ENCODE measurements at regions of chr13 and their contacts with region 1.

Region 1: GRCh38 chr13:49996951-49997895 is at the start of gene TRIM13:
- DNase-seq: peak; percentile 72 to 90 (median 81)
- ATAC-seq: peak; percentile 80
- H3K4me3 ChIP-seq: peak within 1 kb of the TSS; percentile 87 to 99
- H3K4me3 Mint-ChIP-seq: peak within 1 kb of the TSS; percentile 86
- H3K27ac ChIP-seq: peak within 1 kb of the TSS; percentile 84 to 85
- H3K27ac Mint-ChIP-seq: peak within 1 kb of the TSS; percentile 86
- H3K4me1 ChIP-seq: peaks cover 27% of the 10 kb centered on the region
- H3K4me1 Mint-ChIP-seq: peaks cover 49% of the 10 kb centered on the region
- H3K27me3 ChIP-seq: no peaks in the 10 kb centered on the region
- H3K27me3 Mint-ChIP-seq: no peaks in the 10 kb centered on the region
- CTCF ChIP-seq: peak; percentile 78
- total RNA-seq, gene TRIM13: 24.0 to 24.4 TPM

Region 2: DNA sequence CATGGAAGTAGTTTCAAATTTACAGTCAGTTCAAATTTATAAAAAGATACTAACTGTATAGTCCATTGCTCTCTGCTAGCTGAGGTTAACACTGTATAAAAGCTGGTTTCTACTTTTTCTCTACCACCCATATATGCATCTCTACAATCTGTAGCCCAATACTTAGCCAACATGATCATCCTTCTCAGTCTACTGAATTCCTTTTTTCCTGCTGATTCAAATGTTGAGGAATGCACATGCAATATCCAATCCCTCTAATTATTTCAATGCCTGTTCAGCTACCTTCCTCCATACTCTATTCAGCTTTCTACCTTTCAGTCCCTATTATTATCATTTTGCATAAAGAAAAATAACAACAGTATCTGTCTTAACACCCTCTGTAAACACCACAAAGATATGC is 220.4 kb before region 1 on chr13:
- CTCF ChIA-PET with region 1: no interaction called
- POLR2A ChIA-PET with region 1: no interaction called
- intact Hi-C with region 1: no loop called
- DNase-seq: no peak
- ATAC-seq: no peak
- H3K4me3 ChIP-seq: no peak overlapping the region
- H3K4me3 Mint-ChIP-seq: no peak overlapping the region
- H3K27ac ChIP-seq: no peak overlapping the region
- H3K27ac Mint-ChIP-seq: no peak overlapping the region
- H3K4me1 ChIP-seq: peaks cover 15% of the 10 kb centered on the region
- H3K4me1 Mint-ChIP-seq: peaks cover 54% of the 10 kb centered on the region
- H3K27me3 ChIP-seq: no peaks in the 10 kb centered on the region
- H3K27me3 Mint-ChIP-seq: no peaks in the 10 kb centered on the region
- CTCF ChIP-seq: no peak

Region 3: GRCh38 chr13:49936085-49936940 is 60.9 kb before region 1 on chr13 and contains the start of gene SPRYD7:
- CTCF ChIA-PET with region 1: interaction called, 7 read pairs
- POLR2A ChIA-PET with region 1: interaction called, 10 read pairs
- intact Hi-C with region 1: loop called (anchors 1 to 2 kb)
- DNase-seq: peak; percentile 82 to 97 (median 94)
- ATAC-seq: peak; percentile 85
- H3K4me3 ChIP-seq: peak within 1 kb of the TSS; percentile 81 to 98
- H3K4me3 Mint-ChIP-seq: peak within 1 kb of the TSS; percentile 88
- H3K27ac ChIP-seq: peak within 1 kb of the TSS; percentile 37 to 44
- H3K27ac Mint-ChIP-seq: peak within 1 kb of the TSS; percentile 81
- H3K4me1 ChIP-seq: peaks cover 14% of the 10 kb centered on the region
- H3K4me1 Mint-ChIP-seq: peaks cover 19% of the 10 kb centered on the region
- H3K27me3 ChIP-seq: no peaks in the 10 kb centered on the region
- H3K27me3 Mint-ChIP-seq: no peaks in the 10 kb centered on the region
- CTCF ChIP-seq: peak; percentile 62
- total RNA-seq, gene SPRYD7: 1.2 to 1.4 TPM

Region 4: GRCh38 chr13:50071379-50071778 is 74.2 kb after region 1 on chr13:
- CTCF ChIA-PET with region 1: no interaction called
- POLR2A ChIA-PET with region 1: interaction called, 11 read pairs
- intact Hi-C with region 1: no loop called
- DNase-seq: no peak
- ATAC-seq: no peak
- H3K4me3 ChIP-seq: no peak overlapping the region
- H3K4me3 Mint-ChIP-seq: no peak overlapping the region
- H3K27ac ChIP-seq: no peak overlapping the region
- H3K27ac Mint-ChIP-seq: no peak overlapping the region
- H3K4me1 ChIP-seq: no peaks in the 10 kb centered on the region
- H3K4me1 Mint-ChIP-seq: peaks cover 7% of the 10 kb centered on the region
- H3K27me3 ChIP-seq: peaks cover 0 to 11% of the 10 kb centered on the region in 2 experiments
- H3K27me3 Mint-ChIP-seq: peaks cover 12% of the 10 kb centered on the region
- CTCF ChIP-seq: no peak

Region 5: GRCh38 chr13:50236898-50237318 is 239.7 kb after region 1 on chr13:
- CTCF ChIA-PET with region 1: no interaction called
- POLR2A ChIA-PET with region 1: no interaction called
- intact Hi-C with region 1: loop called in 1 of 2 experiments (anchors 5 kb)
- DNase-seq: peak in 5 of 9 experiments; percentile 4 to 82 (median 37)
- ATAC-seq: peak; percentile 86
- H3K4me3 ChIP-seq: peak overlapping the region in 1 of 2 experiments; percentile 2
- H3K4me3 Mint-ChIP-seq: peak overlapping the region; percentile 83
- H3K27ac ChIP-seq: peak overlapping the region; percentile 15 to 64
- H3K27ac Mint-ChIP-seq: peak overlapping the region; percentile 75
- H3K4me1 ChIP-seq: peaks cover 4% of the 10 kb centered on the region
- H3K4me1 Mint-ChIP-seq: peaks cover 17% of the 10 kb centered on the region
- H3K27me3 ChIP-seq: no peaks in the 10 kb centered on the region
- H3K27me3 Mint-ChIP-seq: no peaks in the 10 kb centered on the region
- CTCF ChIP-seq: no peak

Region 6: DNA sequence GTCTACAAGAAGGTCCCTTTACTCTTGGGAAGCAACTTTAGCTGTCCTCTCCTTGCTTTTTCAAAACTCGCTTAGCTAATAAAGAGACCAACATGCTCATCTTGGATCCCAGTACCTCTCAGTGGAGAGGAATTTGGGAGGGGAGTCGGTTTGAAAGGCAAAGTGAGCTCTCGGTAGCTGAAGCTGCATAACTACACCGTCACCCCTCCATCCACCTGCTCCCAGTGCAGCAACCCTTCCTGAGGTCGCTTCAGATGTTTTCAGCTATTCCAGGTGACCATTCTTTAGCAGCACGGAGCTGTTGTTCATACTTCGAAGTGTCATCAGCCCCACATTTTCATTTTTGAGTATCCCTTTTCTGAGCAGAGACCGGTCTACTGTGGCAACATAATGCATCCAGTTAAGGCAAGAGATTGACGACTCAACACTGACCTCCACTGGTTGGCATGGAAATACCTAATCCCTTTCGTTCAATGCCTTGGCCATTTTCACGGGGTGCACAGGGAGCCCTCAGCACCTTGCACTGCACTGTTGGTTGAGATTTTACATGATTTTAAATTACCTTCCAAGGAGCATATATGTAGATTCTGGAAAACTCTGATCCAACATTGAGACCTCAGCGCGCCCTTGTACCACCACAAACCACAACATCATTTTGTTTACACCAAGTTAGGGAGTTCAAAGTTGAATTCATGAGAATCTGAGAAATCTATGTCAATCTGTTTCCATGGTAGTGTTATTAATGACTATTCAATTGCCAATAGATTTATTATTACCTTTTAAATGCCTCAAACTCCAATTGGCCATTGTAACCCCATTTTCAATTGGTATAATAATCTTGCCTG is 804.1 kb after region 1 on chr13:
- CTCF ChIA-PET with region 1: interaction called, 6 read pairs
- POLR2A ChIA-PET with region 1: no interaction called
- intact Hi-C with region 1: loop called in 1 of 2 experiments (anchors 1 kb)
- DNase-seq: peak; percentile 25 to 82 (median 57)
- ATAC-seq: peak; percentile 96
- H3K4me3 ChIP-seq: no peak overlapping the region
- H3K4me3 Mint-ChIP-seq: no peak overlapping the region
- H3K27ac ChIP-seq: no peak overlapping the region
- H3K27ac Mint-ChIP-seq: no peak overlapping the region
- H3K4me1 ChIP-seq: no peaks in the 10 kb centered on the region
- H3K4me1 Mint-ChIP-seq: peaks cover 5% of the 10 kb centered on the region
- H3K27me3 ChIP-seq: no peaks in the 10 kb centered on the region
- H3K27me3 Mint-ChIP-seq: no peaks in the 10 kb centered on the region
- CTCF ChIP-seq: peak; percentile 70

Region 7: DNA sequence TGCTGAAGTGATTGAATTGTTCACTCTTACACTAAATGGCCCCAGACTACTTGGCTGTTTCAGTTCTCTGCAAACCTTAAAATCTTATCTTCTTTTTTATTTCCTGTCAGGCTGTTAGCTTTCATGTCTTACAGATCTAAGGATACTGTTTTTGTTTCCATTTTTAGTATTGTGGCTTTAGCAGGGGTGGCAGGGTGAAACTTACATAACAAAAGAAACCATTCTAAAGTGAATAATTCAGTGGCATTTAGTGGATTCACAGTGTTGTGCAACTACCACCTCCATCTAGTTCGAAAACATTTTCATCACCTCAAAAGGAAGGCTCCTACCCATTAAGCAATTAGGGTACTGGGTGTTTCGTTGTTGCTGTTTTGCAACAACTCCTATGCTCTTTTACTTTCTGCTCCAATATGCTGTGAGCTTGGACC is 1828.0 kb after region 1 on chr13:
- CTCF ChIA-PET with region 1: no interaction called
- POLR2A ChIA-PET with region 1: no interaction called
- intact Hi-C with region 1: loop called in 1 of 2 experiments (anchors 10 kb)
- DNase-seq: peak in 2 of 9 experiments; percentile 60 to 77
- ATAC-seq: peak; percentile 60
- H3K4me3 ChIP-seq: peak overlapping the region; percentile 55 to 59
- H3K4me3 Mint-ChIP-seq: peak overlapping the region; percentile 91
- H3K27ac ChIP-seq: peak overlapping the region; percentile 64 to 74
- H3K27ac Mint-ChIP-seq: peak overlapping the region; percentile 97
- H3K4me1 ChIP-seq: peaks cover 80% of the 10 kb centered on the region
- H3K4me1 Mint-ChIP-seq: peaks cover 91% of the 10 kb centered on the region
- H3K27me3 ChIP-seq: no peaks in the 10 kb centered on the region
- H3K27me3 Mint-ChIP-seq: no peaks in the 10 kb centered on the region
- CTCF ChIP-seq: no peak